Panc1 (cell line): ENCODE measurements at regions of chr16 and their contacts with region 1.

Region 1: GRCh38 chr16:87395193-87395842 is 3.2 kb downstream of the MAP1LC3B start:
- DNase-seq: no peak
- ATAC-seq: no peak
- H3K4me3 ChIP-seq: peak overlapping the region in 1 of 2 experiments; percentile 4; a peak in 1 of 4 replicates
- H3K27ac ChIP-seq: no peak overlapping the region
- H3K4me1 ChIP-seq: peaks cover 16% of the 10 kb centered on the region
- H3K27me3 ChIP-seq: no peaks in the 10 kb centered on the region
- CTCF ChIP-seq: no peak

Region 2: DNA sequence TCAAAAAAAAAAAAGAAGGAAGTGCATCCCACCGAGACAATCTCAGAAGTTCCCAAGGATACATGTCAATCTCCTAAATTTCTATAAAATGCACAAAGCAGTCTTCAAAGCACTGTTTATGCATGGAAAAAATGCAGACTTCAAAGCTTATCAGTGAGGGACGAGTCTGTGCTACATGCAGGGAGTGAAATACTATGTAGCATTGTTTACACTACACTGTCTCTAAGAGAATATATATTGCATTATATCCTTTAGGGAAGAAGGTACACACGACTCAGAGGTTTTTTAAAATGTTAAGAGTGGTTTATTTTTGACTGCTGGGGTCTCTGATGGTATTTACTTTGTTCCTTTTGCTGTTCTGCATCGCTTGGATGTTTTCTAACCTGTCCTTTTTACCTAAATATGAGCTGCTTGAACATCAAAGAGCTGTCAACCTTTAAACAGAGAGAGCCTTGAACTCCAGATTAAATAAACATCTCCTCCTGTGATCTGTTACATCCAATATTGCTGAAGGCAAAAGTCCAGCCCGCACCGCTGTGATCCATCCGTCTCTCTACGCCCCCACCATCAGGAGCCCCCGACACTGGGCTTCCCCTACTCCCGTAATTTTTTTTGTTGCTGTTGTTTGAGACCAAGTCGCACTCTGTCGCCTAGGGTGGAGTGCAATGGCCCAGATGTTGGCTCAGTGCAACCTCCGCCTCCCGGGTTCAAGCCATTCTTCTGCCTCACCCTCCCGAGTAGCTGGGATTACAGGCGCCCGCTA is 13.1 kb before region 1 on chr16:
- CTCF ChIA-PET with region 1: interaction called, 4 read pairs
- POLR2A ChIA-PET with region 1: interaction called, 20 read pairs
- in situ Hi-C with region 1: no loop called
- intact Hi-C with region 1: no loop called
- DNase-seq: no peak
- ATAC-seq: no peak
- H3K4me3 ChIP-seq: peak overlapping the region; percentile 60
- H3K27ac ChIP-seq: peak overlapping the region; percentile 55
- H3K4me1 ChIP-seq: peaks cover 13% of the 10 kb centered on the region
- H3K27me3 ChIP-seq: no peaks in the 10 kb centered on the region
- CTCF ChIP-seq: no peak